Activated CD4-positive, alpha-beta T cell treated with anti-CD3 and anti-CD28 coated beads, Interleukin-2, amount 10 ng/mL, durations not matched to agents 7 days and 5 days (primary cell): ENCODE measurements at regions of chr3 and their contacts with region 1.

Region 1: GRCh38 chr3:15199493-15200105 is 6.4 kb upstream of the CAPN7 start:
- DNase-seq: no peak
- H3K4me3 Mint-ChIP-seq: no peak overlapping the region
- H3K27ac Mint-ChIP-seq: no peak overlapping the region
- H3K4me1 Mint-ChIP-seq: peaks cover 13% of the 10 kb centered on the region
- H3K27me3 Mint-ChIP-seq: peaks cover 21% of the 10 kb centered on the region

Region 2: DNA sequence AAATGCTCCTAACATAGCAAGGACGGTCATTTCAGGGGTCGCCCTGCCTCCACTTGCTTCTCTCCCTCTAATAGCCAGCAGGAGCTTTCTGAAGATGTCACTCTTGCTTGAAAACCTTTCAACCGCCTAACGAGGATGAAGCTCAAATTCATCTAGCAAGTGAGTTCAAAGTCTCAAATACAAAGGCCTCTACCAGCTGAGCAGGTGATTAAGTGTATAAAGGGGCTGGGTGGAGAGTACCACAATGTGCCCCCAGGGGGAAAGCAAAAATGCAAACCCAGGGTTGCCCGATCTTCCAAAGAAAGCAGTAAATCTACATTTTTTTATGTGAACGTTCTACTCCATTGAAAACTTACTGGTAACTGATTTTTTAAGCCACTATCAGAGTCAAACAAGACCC is 609.0 kb before region 1 on chr3:
- CTCF ChIA-PET with region 1: no interaction called
- POLR2A ChIA-PET with region 1: no interaction called
- DNase-seq: no peak
- H3K4me3 Mint-ChIP-seq: no peak overlapping the region
- H3K27ac Mint-ChIP-seq: no peak overlapping the region
- H3K4me1 Mint-ChIP-seq: no peaks in the 10 kb centered on the region
- H3K27me3 Mint-ChIP-seq: peaks cover 7% of the 10 kb centered on the region

Region 3: GRCh38 chr3:15116032-15116669 is 83.4 kb before region 1 on chr3:
- CTCF ChIA-PET with region 1: interaction called, 16 read pairs
- POLR2A ChIA-PET with region 1: no interaction called
- DNase-seq: no peak
- H3K4me3 Mint-ChIP-seq: no peak overlapping the region
- H3K27ac Mint-ChIP-seq: no peak overlapping the region
- H3K4me1 Mint-ChIP-seq: peaks cover 4% of the 10 kb centered on the region
- H3K27me3 Mint-ChIP-seq: no peaks in the 10 kb centered on the region

Region 4: DNA sequence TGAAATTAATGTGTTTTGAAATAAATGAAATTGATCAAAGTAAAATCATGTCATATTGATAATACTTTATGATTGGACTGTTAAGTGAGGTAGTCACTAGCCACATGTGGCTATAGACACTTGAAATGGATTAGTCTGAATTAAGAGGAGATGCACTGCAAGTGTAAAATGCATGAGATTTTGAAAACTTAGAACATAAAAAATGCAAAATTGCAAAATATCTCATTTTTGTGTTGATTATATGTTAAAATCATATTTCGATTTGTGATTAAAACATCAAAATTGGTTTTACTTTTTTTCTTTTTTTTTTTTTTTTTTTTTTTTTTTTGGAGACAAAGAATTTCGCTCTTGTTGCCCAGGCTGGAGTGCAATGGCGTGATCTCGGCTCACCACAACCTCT is 29.7 kb after region 1 on chr3:
- CTCF ChIA-PET with region 1: no interaction called
- POLR2A ChIA-PET with region 1: no interaction called
- DNase-seq: no peak
- H3K4me3 Mint-ChIP-seq: no peak overlapping the region
- H3K27ac Mint-ChIP-seq: no peak overlapping the region
- H3K4me1 Mint-ChIP-seq: no peaks in the 10 kb centered on the region
- H3K27me3 Mint-ChIP-seq: no peaks in the 10 kb centered on the region